AG04450 (cell line): ENCODE measurements at regions of chr15 and their contacts with region 1.

Region 1: GRCh38 chr15:52984507-52984906 is 194.4 kb upstream of the ONECUT1 start:
- DNase-seq: no peak
- H3K4me3 ChIP-seq: no peak overlapping the region
- H3K27ac ChIP-seq: no peak overlapping the region
- H3K27me3 ChIP-seq: no peaks in the 10 kb centered on the region
- CTCF ChIP-seq: no peak

Region 2: GRCh38 chr15:52967967-52968366 is 16.5 kb before region 1 on chr15:
- CTCF ChIA-PET with region 1: no interaction called
- POLR2A ChIA-PET with region 1: no interaction called
- DNase-seq: no peak
- H3K4me3 ChIP-seq: no peak overlapping the region
- H3K27ac ChIP-seq: no peak overlapping the region
- H3K27me3 ChIP-seq: no peaks in the 10 kb centered on the region
- CTCF ChIP-seq: no peak

Region 3: GRCh38 chr15:53000410-53000809 is 15.9 kb after region 1 on chr15:
- CTCF ChIA-PET with region 1: interaction called, 11 read pairs
- POLR2A ChIA-PET with region 1: no interaction called
- DNase-seq: no peak
- H3K4me3 ChIP-seq: no peak overlapping the region
- H3K27ac ChIP-seq: no peak overlapping the region
- H3K27me3 ChIP-seq: no peaks in the 10 kb centered on the region
- CTCF ChIP-seq: no peak